PC-9 (cell line): ENCODE measurements at regions of chr1 and their contacts with region 1.

Region 1: DNA sequence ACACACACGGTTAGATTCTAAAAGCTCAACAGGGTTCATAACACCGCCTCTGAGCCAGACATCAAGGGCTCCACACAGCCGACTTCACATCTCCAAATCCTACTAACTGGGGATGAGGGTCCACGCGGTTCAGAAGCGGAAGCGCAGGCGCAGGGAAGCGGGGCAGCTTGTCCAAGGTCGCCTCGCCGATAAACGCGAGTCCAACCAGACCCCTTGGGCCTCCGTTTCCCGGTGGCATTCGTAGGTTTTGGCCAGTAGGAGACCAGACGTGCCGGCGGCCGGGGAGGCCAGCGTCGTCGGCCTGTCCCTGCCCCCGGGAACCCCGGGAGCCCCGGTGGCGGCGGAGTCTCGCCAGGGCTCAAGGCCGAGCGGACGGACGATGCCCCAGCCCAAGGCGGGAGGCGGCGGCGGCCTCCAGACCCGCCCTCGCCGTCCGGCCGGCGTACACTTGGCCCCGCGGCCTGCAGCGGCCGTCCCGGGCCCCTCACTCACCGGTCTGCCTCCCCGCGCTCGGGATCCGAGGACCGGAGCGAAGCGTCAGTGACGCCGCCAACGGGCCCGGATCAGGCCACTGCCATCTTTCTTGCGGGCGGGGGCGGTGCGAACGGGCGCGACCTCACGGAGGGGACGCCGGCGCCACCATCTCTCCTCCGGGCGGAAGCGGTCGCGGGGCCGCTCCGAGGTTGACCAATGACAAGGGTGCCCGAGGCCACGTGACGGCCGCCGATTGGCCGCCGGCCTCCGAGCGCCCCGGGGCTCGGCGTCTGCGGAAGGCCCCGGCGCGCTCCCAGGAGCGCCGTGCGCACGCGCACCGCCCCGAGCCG is at the start of gene SDF4:
- DNase-seq: peak; percentile 86 to 94
- H3K4me3 ChIP-seq: peak within 1 kb of the TSS; percentile 99
- H3K27ac ChIP-seq: peak within 1 kb of the TSS; percentile 32
- H3K4me1 ChIP-seq: peaks cover 36% of the 10 kb centered on the region
- H3K27me3 ChIP-seq: no peaks in the 10 kb centered on the region
- CTCF ChIP-seq: no peak
- total RNA-seq, gene SDF4: 133 and 139 TPM in 2 replicates

Region 2: GRCh38 chr1:983799-984473 is 247.7 kb before region 1 on chr1:
- CTCF ChIA-PET with region 1: no interaction called
- POLR2A ChIA-PET with region 1: interaction called, 3 read pairs
- intact Hi-C with region 1: loop called (anchors 10 kb)
- DNase-seq: peak in 1 of 2 experiments; percentile 55
- H3K4me3 ChIP-seq: no peak overlapping the region
- H3K27ac ChIP-seq: no peak overlapping the region
- H3K4me1 ChIP-seq: no peaks in the 10 kb centered on the region
- H3K27me3 ChIP-seq: no peaks in the 10 kb centered on the region
- CTCF ChIP-seq: peak; percentile 92

Region 3: DNA sequence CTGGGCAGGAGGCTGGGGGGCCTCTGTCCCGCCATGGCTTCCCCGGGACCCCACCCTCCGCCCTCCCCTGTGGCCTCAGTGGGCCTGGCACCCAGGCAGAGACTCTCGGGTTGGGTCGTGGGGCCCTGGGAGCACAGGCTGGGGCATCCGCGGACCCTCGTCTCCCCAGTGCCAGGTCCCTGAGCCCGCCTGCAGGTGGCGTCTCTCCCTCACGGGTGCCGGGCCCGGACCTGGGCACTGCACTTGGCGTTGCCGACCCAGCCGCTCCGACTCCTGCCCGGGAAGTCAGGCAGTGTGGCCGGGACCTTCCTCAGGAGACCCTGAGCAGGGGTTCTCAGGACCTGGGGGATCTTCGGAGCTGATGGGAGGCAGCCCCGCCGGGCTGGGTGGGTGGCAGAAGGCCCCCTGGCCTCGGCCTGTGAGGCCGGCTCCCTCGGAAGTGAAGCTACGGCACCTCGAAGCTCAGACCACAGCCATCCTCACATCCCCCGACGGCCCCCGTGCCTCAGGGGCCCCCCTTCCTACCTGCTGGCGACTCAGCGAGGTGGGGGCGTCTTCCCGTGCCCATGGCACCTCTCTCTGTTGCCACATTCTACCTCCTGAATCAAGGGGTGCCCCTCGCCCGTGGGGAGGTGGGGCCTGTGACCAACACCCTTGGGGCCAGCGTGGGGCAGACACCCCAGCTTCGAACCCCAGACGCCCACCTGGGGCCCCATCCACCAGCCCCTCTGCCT is 109.4 kb before region 1 on chr1:
- CTCF ChIA-PET with region 1: interaction called, 3 read pairs
- POLR2A ChIA-PET with region 1: no interaction called
- intact Hi-C with region 1: loop called (anchors 2 kb)
- DNase-seq: peak in 1 of 2 experiments; percentile 82
- H3K4me3 ChIP-seq: peak overlapping the region; percentile 29; the same call in 1 of the 2 replicates
- H3K27ac ChIP-seq: no peak overlapping the region
- H3K4me1 ChIP-seq: peaks cover 22% of the 10 kb centered on the region
- H3K27me3 ChIP-seq: no peaks in the 10 kb centered on the region
- CTCF ChIP-seq: peak; percentile 86

Region 4: GRCh38 chr1:1173793-1174415 is 57.7 kb before region 1 on chr1 and contains the start of gene TTLL10:
- CTCF ChIA-PET with region 1: no interaction called
- POLR2A ChIA-PET with region 1: no interaction called
- intact Hi-C with region 1: no loop called
- DNase-seq: no peak
- H3K4me3 ChIP-seq: no peak within 1 kb of the TSS
- H3K27ac ChIP-seq: no peak within 1 kb of the TSS
- H3K4me1 ChIP-seq: no peaks in the 10 kb centered on the region
- H3K27me3 ChIP-seq: no peaks in the 10 kb centered on the region
- CTCF ChIP-seq: no peak
- total RNA-seq, gene TTLL10: 4.0 and 5.8 TPM in 2 replicates